Activated CD4-positive, alpha-beta T cell treated with anti-CD3 and anti-CD28 coated beads, Interleukin-2, amount 10 ng/mL, durations not matched to agents 24 days and 14 days (primary cell): ENCODE measurements at regions of chr12 and their contacts with region 1.

Region 1: GRCh38 chr12:64459394-64459891 is 7.5 kb downstream of the TBK1 start:
- DNase-seq: peak; percentile 72
- H3K4me3 Mint-ChIP-seq: peak overlapping the region; percentile 76
- H3K27ac Mint-ChIP-seq: peak overlapping the region; percentile 92
- H3K4me1 Mint-ChIP-seq: peaks cover 33% of the 10 kb centered on the region
- H3K27me3 Mint-ChIP-seq: no peaks in the 10 kb centered on the region

Region 2: GRCh38 chr12:64412459-64412858 is 47.0 kb before region 1 on chr12:
- intact Hi-C with region 1: no loop called
- DNase-seq: no peak
- H3K4me3 Mint-ChIP-seq: no peak overlapping the region
- H3K27ac Mint-ChIP-seq: no peak overlapping the region
- H3K4me1 Mint-ChIP-seq: peaks cover 27% of the 10 kb centered on the region
- H3K27me3 Mint-ChIP-seq: no peaks in the 10 kb centered on the region

Region 3: GRCh38 chr12:64531665-64532335 is 72.4 kb after region 1 on chr12:
- intact Hi-C with region 1: no loop called
- DNase-seq: no peak
- H3K4me3 Mint-ChIP-seq: no peak overlapping the region
- H3K27ac Mint-ChIP-seq: no peak overlapping the region
- H3K4me1 Mint-ChIP-seq: no peaks in the 10 kb centered on the region
- H3K27me3 Mint-ChIP-seq: peaks cover 3% of the 10 kb centered on the region

Region 4: DNA sequence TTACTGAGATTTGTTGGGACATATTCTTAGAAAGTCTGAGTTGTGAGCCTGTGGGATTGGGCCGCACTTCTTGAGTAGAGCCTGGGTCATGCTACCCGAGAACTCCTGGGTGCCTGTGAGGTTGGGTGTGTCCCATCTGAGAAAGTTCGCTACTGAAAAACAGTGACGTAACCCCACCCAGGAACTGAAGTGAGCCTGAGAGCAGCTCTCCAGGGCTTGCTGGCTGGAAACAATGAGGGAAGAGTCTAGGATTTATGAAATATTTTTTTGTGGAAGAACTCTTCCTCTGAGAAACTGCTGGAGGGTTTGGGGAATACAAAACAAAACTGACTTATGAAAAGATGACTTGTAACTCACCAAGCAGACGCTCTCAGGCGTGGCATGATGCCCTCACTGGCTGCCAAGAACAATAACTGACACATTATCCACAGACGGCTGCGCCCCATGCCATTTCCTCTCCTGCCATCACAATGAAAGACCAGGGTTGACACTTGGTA is 220.1 kb after region 1 on chr12:
- intact Hi-C with region 1: loop called (anchors 5 kb)
- DNase-seq: peak; percentile 87
- H3K4me3 Mint-ChIP-seq: peak overlapping the region; percentile 63
- H3K27ac Mint-ChIP-seq: peak overlapping the region; percentile 78
- H3K4me1 Mint-ChIP-seq: peaks cover 80% of the 10 kb centered on the region
- H3K27me3 Mint-ChIP-seq: no peaks in the 10 kb centered on the region

Region 5: DNA sequence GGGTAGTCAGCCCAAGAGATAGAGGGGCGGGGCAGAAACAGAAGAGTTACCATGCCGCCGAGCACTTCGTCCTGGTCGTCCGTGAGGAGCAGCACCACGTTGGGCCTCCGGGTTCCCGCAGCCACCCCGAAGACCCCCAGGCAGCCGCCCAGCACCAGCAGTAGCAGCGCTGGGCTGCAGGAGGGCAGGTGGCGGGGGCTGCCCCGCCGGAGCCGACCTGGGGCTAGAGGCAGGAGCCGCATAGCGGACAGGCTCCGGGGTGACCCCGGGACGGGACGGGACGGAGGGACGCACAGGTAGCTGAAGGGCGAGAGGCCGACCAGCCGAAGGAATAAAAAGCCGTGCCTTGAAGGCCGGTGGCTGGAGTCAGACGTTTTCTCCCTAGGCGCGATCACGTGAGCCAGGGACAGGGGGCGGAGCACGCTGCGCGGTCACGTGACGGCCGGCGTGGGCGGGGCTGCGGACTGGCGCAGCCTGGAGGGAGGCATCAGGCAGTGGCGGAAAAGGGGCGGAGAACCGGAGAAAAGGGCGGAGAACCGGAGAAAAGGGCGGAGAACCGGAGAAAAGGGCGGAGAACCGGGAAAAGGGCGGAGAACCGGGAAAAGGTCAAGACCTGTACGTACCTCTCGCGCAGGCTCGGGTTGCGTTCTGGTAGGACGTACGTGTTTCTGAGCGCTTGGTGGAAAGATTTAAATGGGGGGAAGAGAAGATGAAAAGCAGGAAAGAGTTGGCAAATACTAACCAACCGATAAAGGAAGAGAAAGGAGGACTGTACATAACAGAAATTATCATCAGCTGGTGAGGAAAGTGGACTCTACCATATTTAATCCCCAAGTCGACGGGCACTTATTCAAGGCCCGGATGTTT is 299.8 kb after region 1 on chr12 and contains the start of gene GNS:
- intact Hi-C with region 1: loop called (anchors 5 kb)
- DNase-seq: peak; percentile 100
- H3K4me3 Mint-ChIP-seq: peak within 1 kb of the TSS; percentile 90
- H3K27ac Mint-ChIP-seq: peak within 1 kb of the TSS; percentile 92
- H3K4me1 Mint-ChIP-seq: peaks cover 37% of the 10 kb centered on the region
- H3K27me3 Mint-ChIP-seq: peaks cover 6% of the 10 kb centered on the region
- total RNA-seq, gene GNS: 19.9 and 20.5 TPM in 2 replicates